GM10248 (cell line): ENCODE measurements at regions of chr17 and their contacts with region 1.

Region 1: DNA sequence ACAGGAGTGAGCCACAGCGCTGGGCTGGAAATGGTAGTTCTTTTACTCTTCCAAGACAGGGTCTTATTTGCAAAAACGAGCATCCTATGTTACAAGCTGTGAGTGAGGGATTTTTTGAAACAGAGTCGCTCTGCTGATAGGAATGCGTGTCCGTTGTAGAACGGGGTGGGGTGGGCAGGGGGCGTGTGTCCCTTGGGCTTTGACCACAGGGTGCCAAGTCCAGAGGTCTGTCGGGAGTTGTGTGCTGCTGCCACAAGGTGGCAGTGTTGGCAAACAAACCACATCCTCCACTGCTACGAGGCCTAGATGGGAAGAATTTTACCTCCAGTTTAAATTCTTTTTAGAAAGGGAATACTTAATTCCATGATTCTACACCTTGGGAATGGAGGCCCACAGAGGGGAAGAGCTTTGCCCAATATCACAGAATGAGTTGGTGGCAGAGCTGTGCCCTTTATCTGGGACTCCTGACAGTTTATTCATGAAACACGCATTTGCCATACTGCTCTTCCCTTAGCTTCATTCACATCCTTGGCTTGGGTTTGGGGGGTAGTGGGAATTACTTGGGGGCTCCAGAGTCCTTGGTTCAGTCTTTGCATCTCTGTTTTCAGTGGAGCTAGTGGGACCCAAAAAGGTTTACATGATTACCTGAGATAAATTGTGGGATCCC is 30.6 kb upstream of the ETV4 start:
- DNase-seq: peak; percentile 76
- CTCF ChIP-seq: peak; percentile 88

Region 2: GRCh38 chr17:43546319-43547188 is 30.1 kb before region 1 on chr17 and contains the start of gene ETV4:
- CTCF ChIA-PET with region 1: interaction called, 14 read pairs
- POLR2A ChIA-PET with region 1: no interaction called
- DNase-seq: peak; percentile 98
- CTCF ChIP-seq: no peak

Region 3: GRCh38 chr17:43683928-43684653 is 107.4 kb after region 1 on chr17:
- CTCF ChIA-PET with region 1: interaction called, 14 read pairs
- POLR2A ChIA-PET with region 1: no interaction called
- DNase-seq: no peak
- CTCF ChIP-seq: no peak

Region 4: DNA sequence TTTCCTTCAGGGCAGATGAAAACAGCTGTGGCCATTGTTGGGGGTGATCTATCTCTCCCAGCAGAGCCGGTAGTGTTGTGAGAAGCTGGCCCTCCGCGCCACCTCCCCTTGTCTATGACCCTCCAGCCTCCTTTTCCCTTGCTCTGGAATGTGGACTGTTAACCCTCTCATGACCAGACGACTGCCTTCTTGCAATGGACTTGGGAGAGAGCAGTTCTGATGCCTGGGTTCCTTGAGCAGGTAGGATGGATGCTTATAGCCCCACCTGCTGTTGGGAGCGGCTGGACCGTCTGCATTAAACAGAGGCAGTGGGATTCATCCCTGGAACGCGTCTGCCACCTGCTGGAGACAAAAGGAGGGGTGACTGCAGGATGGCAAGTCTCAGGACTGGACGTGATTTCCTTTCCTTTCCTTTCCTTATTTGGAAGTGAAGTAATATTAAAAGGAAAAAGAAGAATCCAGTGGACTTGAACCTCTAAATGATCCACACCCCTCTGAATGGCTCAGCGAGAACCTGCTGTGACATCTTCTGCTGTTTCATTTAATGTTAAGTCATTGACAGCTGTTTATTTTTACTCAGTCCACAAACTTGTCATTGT is 183.7 kb after region 1 on chr17:
- CTCF ChIA-PET with region 1: interaction called, 79 read pairs
- POLR2A ChIA-PET with region 1: no interaction called
- DNase-seq: peak; percentile 90
- CTCF ChIP-seq: peak; percentile 100

Region 5: GRCh38 chr17:43846221-43846712 is 269.6 kb after region 1 on chr17:
- CTCF ChIA-PET with region 1: interaction called, 11 read pairs
- POLR2A ChIA-PET with region 1: no interaction called
- DNase-seq: peak; percentile 89
- CTCF ChIP-seq: peak; percentile 97